Right ventricle myocardium superior (tissue), 1 donor: ENCODE measurements at regions of chr2 and their contacts with region 1.

Region 1: DNA sequence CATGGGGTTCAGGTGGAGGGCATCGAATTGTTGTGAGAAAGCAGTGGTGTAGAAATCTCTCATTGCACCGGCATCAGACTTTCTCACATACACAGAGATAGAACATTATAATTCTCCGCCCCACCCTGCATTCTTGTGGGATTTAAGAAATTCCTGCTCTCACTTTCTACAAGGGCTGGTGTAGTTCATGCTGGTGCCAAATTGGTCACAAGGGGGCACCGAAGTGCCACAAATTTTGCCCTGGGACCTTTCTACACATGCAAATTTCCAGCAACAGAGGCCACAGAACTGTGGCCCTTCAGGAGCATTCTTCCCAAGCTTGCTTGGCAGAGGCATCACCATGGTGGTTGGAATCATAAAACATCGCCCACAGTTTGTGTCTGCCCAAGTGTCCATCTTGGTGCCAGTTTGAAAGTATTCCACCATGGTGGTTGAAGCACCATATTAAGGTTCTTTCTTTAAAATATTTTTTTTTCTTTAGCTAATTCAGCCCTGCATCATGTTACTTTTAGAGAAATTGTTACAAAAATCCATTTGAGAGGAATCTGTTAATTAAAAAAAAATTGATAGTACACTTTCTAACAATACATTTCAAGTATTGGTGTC is 521.2 kb upstream of the FANCL start:
- DNase-seq: peak; percentile 35
- ATAC-seq: peak; percentile 61

Region 2: GRCh38 chr2:60581433-60582282 is 1819.4 kb after region 1 on chr2:
- intact Hi-C with region 1: loop called (anchors 10 kb)
- DNase-seq: peak; percentile 83
- ATAC-seq: peak; percentile 98